Endothelial cell of umbilical vein (primary cell): ENCODE measurements at regions of chr16 and their contacts with region 1.

Region 1: GRCh38 chr16:89909777-89910716 is 8.6 kb upstream of the MC1R start:
- DNase-seq: peak; percentile 57
- H3K4me3 ChIP-seq: no peak overlapping the region
- H3K27ac ChIP-seq: no peak overlapping the region
- H3K4me1 ChIP-seq: peaks cover 3% of the 10 kb centered on the region
- H3K27me3 ChIP-seq: no peaks in the 10 kb centered on the region
- CTCF ChIP-seq: peak; percentile 98 to 99
- POLR2A ChIP-seq: no peak

Region 2: GRCh38 chr16:89841275-89841674 is 68.8 kb before region 1 on chr16:
- CTCF ChIA-PET with region 1: no interaction called
- POLR2A ChIA-PET with region 1: no interaction called
- dilution Hi-C with region 1: no loop called
- intact Hi-C with region 1: no loop called
- DNase-seq: no peak
- H3K4me3 ChIP-seq: no peak overlapping the region
- H3K27ac ChIP-seq: no peak overlapping the region
- H3K4me1 ChIP-seq: no peaks in the 10 kb centered on the region
- H3K27me3 ChIP-seq: no peaks in the 10 kb centered on the region
- CTCF ChIP-seq: no peak
- POLR2A ChIP-seq: no peak

Region 3: DNA sequence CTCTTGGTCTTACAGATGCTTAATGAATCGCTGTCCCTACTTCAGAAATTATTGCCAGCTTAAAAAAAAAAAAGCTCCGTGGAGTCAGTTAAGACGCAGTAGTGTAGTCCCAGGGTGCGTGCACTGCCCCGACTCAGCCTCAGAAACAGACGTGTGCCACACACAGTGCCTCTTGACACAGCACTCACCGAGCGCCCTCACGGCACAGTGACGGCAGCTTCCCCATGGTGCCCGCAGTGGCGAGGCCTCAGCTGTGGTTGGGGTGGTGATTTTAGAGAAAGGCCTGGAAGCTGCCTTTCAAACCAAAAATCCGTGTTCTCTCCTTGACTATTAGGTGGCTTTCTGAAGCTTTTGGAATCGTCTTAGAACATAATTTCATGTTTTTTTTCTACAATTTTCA is 22.8 kb before region 1 on chr16:
- CTCF ChIA-PET with region 1: interaction called, 12 read pairs
- POLR2A ChIA-PET with region 1: no interaction called
- dilution Hi-C with region 1: no loop called
- intact Hi-C with region 1: no loop called
- DNase-seq: no peak
- H3K4me3 ChIP-seq: no peak overlapping the region
- H3K27ac ChIP-seq: no peak overlapping the region
- H3K4me1 ChIP-seq: no peaks in the 10 kb centered on the region
- H3K27me3 ChIP-seq: no peaks in the 10 kb centered on the region
- CTCF ChIP-seq: no peak
- POLR2A ChIP-seq: no peak

Region 4: DNA sequence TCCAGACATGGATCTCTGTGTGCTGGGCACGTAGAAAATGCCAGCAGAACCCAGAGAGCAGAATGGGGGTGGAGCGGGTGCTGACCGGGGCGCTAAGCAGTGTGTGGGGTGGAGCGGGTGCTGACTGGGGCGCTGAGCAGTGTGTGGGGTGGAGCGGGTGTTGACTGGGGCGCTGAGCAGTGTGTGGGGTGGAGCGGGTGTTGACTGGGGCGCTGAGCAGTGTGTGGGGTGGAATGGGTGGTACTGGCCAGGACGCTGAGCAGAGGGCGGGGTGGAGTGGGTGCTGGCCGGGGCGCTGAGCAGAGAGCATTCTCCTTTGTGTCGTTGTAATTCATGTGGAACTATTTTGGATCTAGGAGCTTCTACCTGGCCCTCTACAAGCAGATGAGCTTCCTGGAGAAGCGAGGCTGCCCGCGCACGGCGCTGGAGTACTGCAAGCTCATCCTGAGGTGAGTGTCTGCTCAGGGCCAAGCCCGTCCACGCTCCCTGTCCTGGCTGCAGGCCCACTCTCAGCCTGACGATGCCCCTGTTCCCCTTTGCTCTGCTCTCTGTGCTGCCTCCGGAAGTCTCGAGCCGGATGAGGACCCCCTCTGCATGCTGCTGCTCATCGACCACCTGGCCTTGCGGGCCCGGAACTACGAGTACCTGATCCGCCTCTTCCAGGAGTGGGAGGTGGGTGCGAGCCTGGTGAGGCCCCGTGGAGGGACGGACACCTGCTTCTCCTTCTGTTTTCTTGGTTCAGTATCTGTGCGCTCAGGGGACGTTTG is 11.7 kb before region 1 on chr16:
- CTCF ChIA-PET with region 1: interaction called, 11 read pairs
- POLR2A ChIA-PET with region 1: no interaction called
- dilution Hi-C with region 1: no loop called
- intact Hi-C with region 1: no loop called
- DNase-seq: no peak
- H3K4me3 ChIP-seq: no peak overlapping the region
- H3K27ac ChIP-seq: no peak overlapping the region
- H3K4me1 ChIP-seq: no peaks in the 10 kb centered on the region
- H3K27me3 ChIP-seq: no peaks in the 10 kb centered on the region
- CTCF ChIP-seq: no peak
- POLR2A ChIP-seq: no peak